ENCODE measurements at regions of chr1 and their contacts with region 1.

Region 1: GRCh38 chr1:218510153-218510772 is 165.1 kb downstream of the TGFB2 start:
- DNase-seq: no peak
- H3K4me3 ChIP-seq: no peak overlapping the region
- H3K27ac ChIP-seq: no peak overlapping the region
- H3K27me3 ChIP-seq: no peaks in the 10 kb centered on the region
- CTCF ChIP-seq: no peak

Region 2: GRCh38 chr1:218557731-218558130 is 47.5 kb after region 1 on chr1:
- CTCF ChIA-PET with region 1: no interaction called
- POLR2A ChIA-PET with region 1: no interaction called
- DNase-seq: no peak
- H3K4me3 ChIP-seq: no peak overlapping the region
- H3K27ac ChIP-seq: no peak overlapping the region
- H3K27me3 ChIP-seq: no peaks in the 10 kb centered on the region
- CTCF ChIP-seq: no peak

Region 3: DNA sequence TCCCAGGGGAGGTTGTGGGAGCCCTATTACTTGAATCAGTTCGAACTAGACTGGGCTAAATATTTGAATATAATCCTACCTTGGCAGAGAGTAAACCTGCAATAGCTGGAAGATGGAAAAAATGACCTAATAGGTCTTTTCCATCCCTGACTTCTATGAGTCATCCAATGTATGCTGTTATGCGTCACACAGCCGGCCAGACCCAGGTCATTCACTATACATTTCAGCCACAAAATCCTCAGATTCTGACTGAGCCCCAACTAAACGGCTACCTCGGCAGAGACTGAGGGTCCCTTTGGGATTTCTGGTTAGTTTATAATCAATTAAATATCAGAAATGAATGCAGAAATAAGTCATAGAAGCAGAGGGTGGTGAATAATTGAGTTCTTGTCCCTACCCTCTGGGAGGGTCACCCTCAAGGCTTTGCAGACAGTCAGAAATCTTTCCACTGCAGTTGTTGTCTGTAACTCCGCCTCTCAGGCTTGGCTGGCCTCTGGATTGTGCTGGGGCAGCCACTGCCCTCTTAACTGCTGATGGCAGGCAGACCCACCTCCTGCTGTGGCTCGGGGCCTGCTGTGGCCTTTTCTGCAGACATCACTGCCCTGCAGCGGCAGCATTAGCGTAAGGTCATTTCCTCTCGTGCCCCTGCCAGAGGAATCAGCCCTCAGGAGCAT is 75.4 kb after region 1 on chr1:
- CTCF ChIA-PET with region 1: no interaction called
- POLR2A ChIA-PET with region 1: no interaction called
- DNase-seq: peak; percentile 29
- H3K4me3 ChIP-seq: no peak overlapping the region
- H3K27ac ChIP-seq: peak overlapping the region; percentile 49
- H3K27me3 ChIP-seq: no peaks in the 10 kb centered on the region
- CTCF ChIP-seq: no peak

Region 4: GRCh38 chr1:218967254-218967653 is 457.0 kb after region 1 on chr1:
- CTCF ChIA-PET with region 1: no interaction called
- POLR2A ChIA-PET with region 1: interaction called, 11 read pairs
- DNase-seq: no peak
- H3K4me3 ChIP-seq: no peak overlapping the region
- H3K27ac ChIP-seq: no peak overlapping the region
- H3K27me3 ChIP-seq: no peaks in the 10 kb centered on the region
- CTCF ChIP-seq: no peak

Measured in AG04450 (cell line).